Adrenal gland (tissue), 19 donors: ENCODE measurements at regions of chr5 and their contacts with region 1.

Region 1: GRCh38 chr5:160021831-160022446 is 13.0 kb downstream of the TTC1 start:
- DNase-seq: peak; percentile 41 to 75 (median 56)
- H3K4me3 ChIP-seq: no peak overlapping the region
- H3K27ac ChIP-seq: no peak overlapping the region
- H3K4me1 ChIP-seq: peaks cover 0 to 16% of the 10 kb centered on the region in 2 donors
- H3K27me3 ChIP-seq: no peaks in the 10 kb centered on the region
- CTCF ChIP-seq: peak; percentile 67 to 87 (median 84)
- POLR2A ChIP-seq: no peak

Region 2: GRCh38 chr5:159965031-159965837 is 56.7 kb before region 1 on chr5:
- intact Hi-C with region 1: no loop called
- DNase-seq: peak; percentile 33 to 57 (median 49)
- H3K4me3 ChIP-seq: no peak overlapping the region
- H3K27ac ChIP-seq: no peak overlapping the region
- H3K4me1 ChIP-seq: no peaks in the 10 kb centered on the region
- H3K27me3 ChIP-seq: peaks cover under 1% of the 10 kb centered on the region
- CTCF ChIP-seq: peak; percentile 17 to 55 (median 49)
- POLR2A ChIP-seq: no peak

Region 3: DNA sequence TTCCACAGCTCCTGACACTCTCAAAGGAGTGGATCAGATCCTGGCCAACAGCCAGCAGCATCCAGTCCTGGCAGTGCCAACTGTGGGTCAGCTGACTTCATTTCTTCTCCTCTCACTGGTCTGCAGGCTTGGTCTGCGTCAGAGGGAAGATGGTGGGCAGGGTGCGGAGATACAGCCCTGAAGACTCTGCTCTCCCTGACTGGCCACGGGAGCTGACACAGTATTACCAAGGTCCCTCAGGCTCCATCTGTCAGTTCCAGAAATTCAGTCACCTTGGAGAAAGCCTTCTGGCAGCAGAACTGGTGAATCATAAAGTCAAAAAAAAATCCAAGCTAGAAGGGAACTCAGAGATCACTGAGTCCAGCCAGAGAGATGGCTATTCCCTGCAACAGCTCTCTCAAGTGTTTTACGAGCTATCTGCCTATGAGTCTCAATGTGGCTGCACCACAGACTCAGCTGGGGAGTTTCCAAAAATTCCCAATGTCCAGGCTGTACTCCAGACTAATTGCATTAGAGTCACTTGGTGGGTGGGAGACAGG is 320.5 kb after region 1 on chr5:
- intact Hi-C with region 1: loop called in 1 of 2 experiments (anchors 5 kb)
- DNase-seq: peak; percentile 70 to 93 (median 90)
- H3K4me3 ChIP-seq: no peak overlapping the region
- H3K27ac ChIP-seq: peak overlapping the region; percentile 56 to 89 (median 65)
- H3K4me1 ChIP-seq: peaks cover 22 to 34% of the 10 kb centered on the region in 2 donors
- H3K27me3 ChIP-seq: no peaks in the 10 kb centered on the region
- CTCF ChIP-seq: no peak
- POLR2A ChIP-seq: peak in 1 of 2 donors; percentile 49

Region 4: GRCh38 chr5:160385496-160385895 is 363.6 kb after region 1 on chr5:
- intact Hi-C with region 1: loop called in 1 of 2 experiments (anchors 5 kb)
- DNase-seq: no peak
- H3K4me3 ChIP-seq: no peak overlapping the region
- H3K27ac ChIP-seq: no peak overlapping the region
- H3K4me1 ChIP-seq: no peaks in the 10 kb centered on the region
- H3K27me3 ChIP-seq: no peaks in the 10 kb centered on the region
- CTCF ChIP-seq: no peak
- POLR2A ChIP-seq: no peak